K562 (cell line): ENCODE measurements at regions of chr19 and their contacts with region 1.

Region 1: GRCh38 chr19:34066007-34066643 is 106.2 kb upstream of the LSM14A start:
- DNase-seq: peak in 1 of 4 experiments; percentile 11
- ATAC-seq: peak; percentile 56
- H3K4me3 ChIP-seq: no peak overlapping the region
- H3K27ac ChIP-seq: no peak overlapping the region
- H3K4me1 ChIP-seq: no peaks in the 10 kb centered on the region
- H3K27me3 ChIP-seq: peaks cover 6 to 30% of the 10 kb centered on the region in 2 experiments; a peak in 3 of 5 replicates
- CTCF ChIP-seq: no peak
- EP300 ChIP-seq: no peak
- POLR2A ChIP-seq: no peak
- RAD21 ChIP-seq: no peak

Region 2: DNA sequence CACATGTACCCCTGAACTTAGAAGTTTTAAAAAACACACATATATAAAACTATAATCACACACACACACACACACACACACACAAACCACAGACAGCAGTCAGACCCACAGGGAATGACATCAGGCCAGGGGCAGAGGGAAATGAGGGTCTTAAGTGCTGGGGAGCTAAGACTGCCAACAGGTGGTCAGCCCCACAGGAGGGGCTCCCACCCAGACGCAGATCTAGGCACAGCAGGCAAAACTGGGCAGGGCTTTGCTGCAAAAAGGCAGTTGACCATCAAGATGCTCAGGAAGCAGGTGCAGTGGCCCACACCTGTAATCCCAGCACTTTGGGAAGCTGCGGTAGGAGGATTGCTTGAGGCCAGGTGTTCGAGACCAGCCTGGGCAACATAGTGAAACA is 14.9 kb before region 1 on chr19:
- CTCF ChIA-PET with region 1: no interaction called
- POLR2A ChIA-PET with region 1: interaction called, 10 read pairs
- in situ Hi-C with region 1: no loop called
- intact Hi-C with region 1: no loop called
- DNase-seq: no peak
- ATAC-seq: no peak
- H3K4me3 ChIP-seq: no peak overlapping the region
- H3K27ac ChIP-seq: no peak overlapping the region
- H3K4me1 ChIP-seq: no peaks in the 10 kb centered on the region
- H3K27me3 ChIP-seq: peaks cover 5 to 26% of the 10 kb centered on the region in 2 experiments; a peak in 3 of 5 replicates
- CTCF ChIP-seq: no peak
- EP300 ChIP-seq: no peak
- POLR2A ChIP-seq: no peak
- RAD21 ChIP-seq: no peak

Region 3: GRCh38 chr19:34171877-34172660 is 105.9 kb after region 1 on chr19 and contains the start of gene LSM14A:
- CTCF ChIA-PET with region 1: no interaction called
- POLR2A ChIA-PET with region 1: no interaction called
- in situ Hi-C with region 1: no loop called
- intact Hi-C with region 1: no loop called
- DNase-seq: peak; percentile 92 to 95 (median 94)
- ATAC-seq: peak; percentile 82
- H3K4me3 ChIP-seq: peak within 1 kb of the TSS; percentile 96
- H3K27ac ChIP-seq: peak within 1 kb of the TSS; percentile 91
- H3K4me1 ChIP-seq: peaks cover 21 to 23% of the 10 kb centered on the region in 2 experiments
- H3K27me3 ChIP-seq: no peaks in the 10 kb centered on the region
- CTCF ChIP-seq: no peak
- EP300 ChIP-seq: no peak
- POLR2A ChIP-seq: peak; percentile 97
- RAD21 ChIP-seq: no peak
- polyA plus RNA-seq, gene LSM14A: 19.5 to 25.7 TPM